Heart left ventricle (tissue), 16 donors: ENCODE measurements at regions of chr17 and their contacts with region 1.

Region 1: GRCh38 chr17:1999557-2000251 is 25.4 kb downstream of the RTN4RL1 start:
- DNase-seq: peak; percentile 63 to 80 (median 73)
- ATAC-seq: peak; percentile 80 to 93 (median 88)
- H3K4me3 ChIP-seq: peak overlapping the region in 2 of 12 donors; percentile 3 to 22
- H3K27ac ChIP-seq: peak overlapping the region; percentile 80 to 97 (median 88)
- H3K4me1 ChIP-seq: peaks cover 0 to 55% (median 24%) of the 10 kb centered on the region in 12 donors
- H3K27me3 ChIP-seq: peaks cover 0 to 22% (median 0%) of the 10 kb centered on the region in 9 donors
- CTCF ChIP-seq: no peak
- POLR2A ChIP-seq: no peak

Region 2: DNA sequence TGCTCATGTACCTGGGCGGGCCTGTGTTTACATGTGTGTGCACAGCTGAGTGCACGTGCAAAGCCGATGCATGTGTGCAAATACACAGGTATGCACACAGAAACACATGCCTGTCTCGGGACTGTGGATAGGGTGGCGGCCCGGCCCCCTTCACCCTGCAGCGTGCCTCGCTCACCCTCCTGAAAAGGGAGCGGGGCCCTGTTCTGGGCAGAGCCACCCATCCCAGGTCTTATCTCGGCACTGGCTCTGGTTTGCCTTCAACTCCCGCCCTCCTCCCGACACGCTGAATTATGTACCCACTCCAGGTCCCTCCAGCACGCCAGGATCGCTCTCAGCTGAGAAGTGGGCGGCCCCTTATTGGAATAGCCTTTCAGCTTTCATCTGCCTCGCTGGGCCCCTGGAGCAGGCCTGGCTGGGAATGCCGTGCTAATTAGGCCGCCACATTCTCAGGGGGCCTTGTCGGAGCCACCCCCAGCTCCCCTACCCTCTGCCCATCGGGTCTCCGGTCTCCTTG is 52.4 kb before region 1 on chr17:
- intact Hi-C with region 1: loop called in 1 of 10 experiments (anchors 5 kb)
- DNase-seq: peak in 4 of 5 donors; percentile 68 to 91 (median 78)
- ATAC-seq: peak; percentile 93 to 96 (median 94)
- H3K4me3 ChIP-seq: peak overlapping the region in 1 of 12 donors; percentile 12
- H3K27ac ChIP-seq: peak overlapping the region in 11 of 12 donors; percentile 48 to 92 (median 83)
- H3K4me1 ChIP-seq: peaks cover 0 to 28% (median 0%) of the 10 kb centered on the region in 12 donors
- H3K27me3 ChIP-seq: no peaks in the 10 kb centered on the region
- CTCF ChIP-seq: no peak
- POLR2A ChIP-seq: no peak

Region 3: GRCh38 chr17:1967213-1967612 is 32.5 kb before region 1 on chr17:
- intact Hi-C with region 1: no loop called
- DNase-seq: no peak
- ATAC-seq: no peak
- H3K4me3 ChIP-seq: no peak overlapping the region
- H3K27ac ChIP-seq: peak overlapping the region in 1 of 12 donors; percentile 71
- H3K4me1 ChIP-seq: peaks cover 0 to 16% (median 3%) of the 10 kb centered on the region in 12 donors
- H3K27me3 ChIP-seq: no peaks in the 10 kb centered on the region
- CTCF ChIP-seq: no peak
- POLR2A ChIP-seq: no peak